Cardiac septum (tissue), 1 donor: ENCODE measurements at regions of chr9 and their contacts with region 1.

Region 1: GRCh38 chr9:99357575-99357974 is 135.5 kb downstream of the SEC61B start:
- DNase-seq: peak; percentile 84

Region 2: GRCh38 chr9:99451112-99451606 is 93.6 kb after region 1 on chr9:
- intact Hi-C with region 1: loop called (anchors 2 kb)
- DNase-seq: peak; percentile 83